A673 (cell line): ENCODE measurements at regions of chr7 and their contacts with region 1.

Region 1: GRCh38 chr7:139745678-139746143 is 32.1 kb downstream of the HIPK2 start:
- DNase-seq: no peak
- H3K4me3 ChIP-seq: no peak overlapping the region
- H3K27ac ChIP-seq: no peak overlapping the region
- H3K4me1 ChIP-seq: peaks cover 14% of the 10 kb centered on the region
- H3K27me3 ChIP-seq: no peaks in the 10 kb centered on the region
- CTCF ChIP-seq: no peak

Region 2: GRCh38 chr7:139725077-139725476 is 20.6 kb before region 1 on chr7:
- CTCF ChIA-PET with region 1: no interaction called
- POLR2A ChIA-PET with region 1: no interaction called
- intact Hi-C with region 1: loop called (anchors 2 kb)
- DNase-seq: no peak
- H3K4me3 ChIP-seq: no peak overlapping the region
- H3K27ac ChIP-seq: no peak overlapping the region
- H3K4me1 ChIP-seq: no peaks in the 10 kb centered on the region
- H3K27me3 ChIP-seq: no peaks in the 10 kb centered on the region
- CTCF ChIP-seq: no peak